Posterior vena cava (tissue), 2 donors: ENCODE measurements at regions of chr16 and their contacts with region 1.

Region 1: GRCh38 chr16:56202036-56202435 is 10.7 kb downstream of the GNAO1 start:
- DNase-seq: no peak

Region 2: GRCh38 chr16:56226187-56226586 is 24.2 kb after region 1 on chr16:
- intact Hi-C with region 1: loop called in 1 of 2 experiments (anchors 1 kb)
- DNase-seq: no peak

Region 3: DNA sequence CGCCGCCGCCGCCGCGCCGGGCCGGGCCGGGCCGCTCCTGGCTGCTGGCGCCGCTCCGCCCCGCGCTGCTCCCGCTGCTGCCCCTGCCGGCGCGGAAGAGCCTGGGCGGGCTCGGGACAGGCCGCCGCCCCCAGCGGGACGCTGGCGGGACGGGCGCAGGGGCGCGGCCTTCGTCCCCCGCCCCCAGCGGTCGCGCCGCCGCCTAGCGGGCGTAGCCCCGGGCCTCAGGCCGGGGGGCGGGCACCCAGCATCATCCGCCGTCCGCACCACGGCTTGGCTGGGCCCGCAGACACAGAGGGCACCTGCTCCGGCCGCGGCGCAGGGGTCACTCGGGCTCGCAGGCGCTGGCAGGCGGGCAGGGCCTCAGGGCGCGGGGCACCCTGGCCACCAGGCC is 223.4 kb after region 1 on chr16 and contains the start of gene AMFR:
- intact Hi-C with region 1: no loop called
- DNase-seq: peak; percentile 89
- total RNA-seq, gene AMFR: 102 to 116 TPM